H1 (cell line): ENCODE measurements at regions of chr6 and their contacts with region 1.

Region 1: DNA sequence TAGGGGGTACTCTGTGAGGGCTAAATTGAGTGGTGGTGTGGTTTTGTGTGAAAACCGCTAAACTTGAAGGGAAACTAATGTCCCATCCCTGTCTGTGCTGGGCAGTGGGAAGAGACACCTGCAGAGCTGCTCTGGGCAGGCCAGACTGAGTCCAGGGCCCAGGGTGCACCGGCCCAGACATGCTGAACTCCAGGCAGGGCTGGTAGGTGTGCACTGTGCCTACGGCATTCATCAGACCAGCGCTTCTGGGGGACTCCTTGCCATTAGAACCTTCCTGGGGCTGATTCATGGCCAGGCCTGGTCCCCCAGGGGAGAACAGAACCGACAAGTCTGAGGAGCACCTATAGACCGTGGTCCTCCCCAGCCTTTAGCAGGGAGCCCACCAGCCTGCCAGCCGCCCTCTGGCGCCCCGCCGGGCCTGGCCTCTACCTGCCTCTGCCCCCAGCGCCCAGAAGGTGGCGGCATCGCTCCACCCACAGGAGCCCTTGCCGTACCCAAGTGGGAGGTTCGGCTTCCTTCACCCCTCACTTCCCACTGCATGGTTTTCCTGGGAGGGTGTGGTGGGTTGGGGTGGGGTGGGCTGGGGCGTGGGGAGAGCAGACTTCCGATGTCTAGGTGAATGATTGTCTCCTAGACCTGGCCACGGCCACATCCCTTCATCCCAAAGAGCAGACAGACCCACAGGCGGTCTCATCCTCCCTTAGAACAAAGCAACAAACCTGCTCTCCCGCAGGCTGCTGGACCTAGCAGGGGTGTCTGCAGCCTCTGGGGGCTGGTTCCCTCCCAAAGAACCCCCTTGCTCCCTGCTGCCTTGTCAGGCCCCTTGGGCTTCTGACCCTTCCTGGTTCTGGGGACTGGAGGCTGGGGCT is 15.5 kb downstream of the CCDC167 start:
- DNase-seq: peak; percentile 23 to 93
- H3K4me3 ChIP-seq: no peak overlapping the region
- H3K27ac ChIP-seq: no peak overlapping the region
- H3K4me1 ChIP-seq: peaks cover 0 to 15% (median 4%) of the 10 kb centered on the region in 4 experiments; a peak in 5 of 7 replicates
- H3K27me3 ChIP-seq: no peaks in the 10 kb centered on the region
- CTCF ChIP-seq: peak in 2 of 3 experiments; percentile 91 to 97; a peak in 3 of 4 replicates
- EP300 ChIP-seq: no peak
- POLR2A ChIP-seq: no peak
- RAD21 ChIP-seq: peak; percentile 97 to 98

Region 2: DNA sequence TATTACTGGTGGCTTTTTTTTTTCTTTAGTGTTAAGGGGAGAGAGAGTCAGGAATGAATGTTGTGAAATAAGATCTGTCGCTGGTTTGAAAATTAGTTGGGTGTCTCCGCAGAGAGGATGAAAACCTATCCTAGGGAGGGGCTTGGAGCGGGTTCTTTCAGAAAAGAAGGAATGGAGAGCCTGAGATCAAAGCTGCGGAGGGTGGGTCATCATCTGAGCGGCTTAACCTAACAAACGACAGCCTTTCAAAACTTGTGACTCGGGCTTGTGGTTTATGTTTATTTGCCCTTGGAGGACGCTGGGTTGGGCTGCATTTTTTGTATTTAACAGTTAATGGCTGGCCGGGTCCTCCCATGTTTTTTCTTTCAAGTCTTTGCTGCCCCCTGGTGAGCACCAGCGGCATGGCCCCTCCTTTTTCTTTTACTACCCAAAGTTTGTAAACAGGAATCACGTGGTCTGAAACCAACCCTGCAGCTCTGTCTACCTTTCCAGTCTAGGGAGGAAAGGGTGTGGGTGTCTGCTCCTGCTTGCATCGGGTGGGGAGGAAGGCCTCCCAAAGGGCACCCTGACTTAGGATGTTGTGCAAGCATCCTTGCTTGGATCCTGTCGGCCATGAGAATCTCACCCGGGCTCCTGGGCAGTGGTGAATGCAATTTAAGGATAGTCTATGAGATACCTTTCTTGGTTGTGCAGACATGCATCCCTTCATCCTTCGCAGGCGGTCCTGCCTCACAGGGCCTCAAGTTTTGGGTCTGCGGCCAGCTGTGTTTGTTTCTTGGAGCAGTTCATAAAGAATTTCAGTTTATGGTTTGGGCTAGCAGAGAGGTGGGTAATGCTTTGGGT is 312.0 kb before region 1 on chr6:
- CTCF ChIA-PET with region 1: no interaction called
- POLR2A ChIA-PET with region 1: no interaction called
- DNase-seq: peak; percentile 78 to 92
- H3K4me3 ChIP-seq: peak overlapping the region; percentile 92 to 99 (median 94)
- H3K27ac ChIP-seq: no peak overlapping the region
- H3K4me1 ChIP-seq: peaks cover 6 to 14% (median 10%) of the 10 kb centered on the region in 4 experiments; a peak in 5 of 7 replicates
- H3K27me3 ChIP-seq: no peaks in the 10 kb centered on the region
- CTCF ChIP-seq: peak; percentile 49 to 75 (median 68)
- EP300 ChIP-seq: peak in 1 of 2 experiments; percentile 6; a peak in 1 of 3 replicates
- POLR2A ChIP-seq: peak in 1 of 2 experiments; percentile 61; a peak in 1 of 3 replicates
- RAD21 ChIP-seq: peak; percentile 84 to 85

Region 3: GRCh38 chr6:37432916-37433656 is 51.1 kb before region 1 on chr6 and contains the start of gene CMTR1:
- CTCF ChIA-PET with region 1: interaction called, 10 read pairs
- POLR2A ChIA-PET with region 1: interaction called, 5 read pairs
- DNase-seq: peak; percentile 59 to 97
- H3K4me3 ChIP-seq: peak within 1 kb of the TSS; percentile 80 to 92 (median 86)
- H3K27ac ChIP-seq: peak within 1 kb of the TSS; percentile 80; the same call in 1 of the 2 replicates
- H3K4me1 ChIP-seq: peaks cover 0 to 12% (median 3%) of the 10 kb centered on the region in 4 experiments; a peak in 4 of 7 replicates
- H3K27me3 ChIP-seq: no peaks in the 10 kb centered on the region
- CTCF ChIP-seq: no peak
- EP300 ChIP-seq: no peak; a peak in 1 of 3 replicates
- POLR2A ChIP-seq: peak; percentile 60 to 92
- RAD21 ChIP-seq: 0 out of 4 replicates have a peak, but pooled peaks of 1 of the 2 experiments have one; percentile 0
- total RNA-seq, gene CMTR1: 33.1 and 34.3 TPM in 2 replicates

Region 4: DNA sequence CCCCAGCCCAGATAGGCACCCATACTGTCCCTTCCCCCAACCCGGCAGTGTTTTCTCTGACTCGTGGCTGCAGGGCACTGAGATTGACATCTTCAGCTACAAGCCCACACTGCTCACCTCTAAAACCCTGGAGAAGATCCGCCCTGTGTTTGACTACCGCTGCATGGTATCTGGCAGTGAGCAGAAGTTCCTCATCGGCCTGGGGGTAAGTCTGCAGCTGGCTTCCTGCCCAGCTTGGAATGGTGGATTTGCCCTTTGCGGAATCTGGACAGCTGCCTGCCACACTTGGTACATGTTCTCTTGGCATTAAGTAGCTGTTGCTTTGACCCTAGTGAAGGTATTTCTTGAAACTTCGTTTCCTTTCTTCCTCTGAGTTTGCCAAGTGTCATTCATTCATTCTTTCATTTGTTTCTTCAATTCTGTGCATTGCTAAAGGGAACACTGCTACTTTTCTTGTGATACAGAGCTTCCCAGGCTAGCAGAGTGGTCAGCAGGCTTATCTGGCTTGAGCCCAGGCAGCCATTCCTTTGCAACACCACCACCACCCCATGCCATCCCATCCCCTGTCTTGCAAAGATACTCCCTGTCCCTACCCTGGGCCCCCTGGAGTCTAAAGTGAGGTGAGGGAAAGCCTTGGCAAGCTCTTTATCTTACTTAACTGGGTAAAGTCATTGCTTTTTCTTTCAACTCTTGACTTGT is 10.6 kb before region 1 on chr6:
- CTCF ChIA-PET with region 1: interaction called, 11 read pairs
- POLR2A ChIA-PET with region 1: interaction called, 3 read pairs
- DNase-seq: no peak
- H3K4me3 ChIP-seq: no peak overlapping the region
- H3K27ac ChIP-seq: no peak overlapping the region
- H3K4me1 ChIP-seq: no peaks in the 10 kb centered on the region
- H3K27me3 ChIP-seq: no peaks in the 10 kb centered on the region
- CTCF ChIP-seq: no peak
- EP300 ChIP-seq: no peak
- POLR2A ChIP-seq: no peak
- RAD21 ChIP-seq: no peak

Region 5: DNA sequence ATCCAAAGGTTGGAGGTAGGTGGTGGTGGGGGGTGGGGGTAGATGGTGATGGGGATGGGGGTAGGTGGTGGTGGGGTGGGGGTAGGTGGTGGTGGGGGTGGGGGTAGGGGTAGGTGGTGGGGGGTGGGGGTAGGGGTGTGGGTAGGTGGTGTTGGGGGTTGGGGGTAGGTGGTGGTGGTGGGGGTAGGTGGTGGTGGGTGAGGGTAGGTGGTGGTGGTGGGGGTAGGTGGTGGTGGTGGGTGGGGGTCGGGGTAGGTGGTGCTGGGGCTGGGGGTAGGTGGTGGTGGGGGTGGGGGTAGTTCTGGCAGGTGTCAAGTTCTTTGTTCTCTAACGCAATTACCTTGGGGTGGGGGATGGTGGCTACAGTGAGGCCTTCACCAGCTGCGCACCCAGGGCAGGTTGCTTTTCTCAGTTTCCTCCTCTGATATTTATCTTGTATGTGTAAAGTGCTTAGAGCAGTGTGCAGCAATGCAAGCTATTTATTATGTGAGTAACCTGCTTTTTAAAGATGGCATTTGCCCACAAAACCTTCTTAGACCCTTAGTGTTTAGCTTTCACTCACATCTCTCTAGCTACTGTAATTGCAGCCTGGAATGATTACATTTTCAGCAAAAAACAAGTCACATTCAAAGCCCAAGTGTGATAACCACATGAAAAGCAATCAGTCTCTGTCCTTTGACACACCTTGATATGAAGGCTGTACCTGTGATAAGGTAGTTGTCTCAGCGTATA is 23.7 kb after region 1 on chr6:
- CTCF ChIA-PET with region 1: interaction called, 12 read pairs
- POLR2A ChIA-PET with region 1: interaction called, 3 read pairs
- DNase-seq: no peak
- H3K4me3 ChIP-seq: no peak overlapping the region
- H3K27ac ChIP-seq: no peak overlapping the region
- H3K4me1 ChIP-seq: peaks cover 3 to 22% (median 19%) of the 10 kb centered on the region in 4 experiments; a peak in 6 of 7 replicates
- H3K27me3 ChIP-seq: peaks cover 0 to 21% (median 16%) of the 10 kb centered on the region in 4 experiments; a peak in 6 of 7 replicates
- CTCF ChIP-seq: no peak
- EP300 ChIP-seq: no peak
- POLR2A ChIP-seq: no peak
- RAD21 ChIP-seq: no peak

Region 6: DNA sequence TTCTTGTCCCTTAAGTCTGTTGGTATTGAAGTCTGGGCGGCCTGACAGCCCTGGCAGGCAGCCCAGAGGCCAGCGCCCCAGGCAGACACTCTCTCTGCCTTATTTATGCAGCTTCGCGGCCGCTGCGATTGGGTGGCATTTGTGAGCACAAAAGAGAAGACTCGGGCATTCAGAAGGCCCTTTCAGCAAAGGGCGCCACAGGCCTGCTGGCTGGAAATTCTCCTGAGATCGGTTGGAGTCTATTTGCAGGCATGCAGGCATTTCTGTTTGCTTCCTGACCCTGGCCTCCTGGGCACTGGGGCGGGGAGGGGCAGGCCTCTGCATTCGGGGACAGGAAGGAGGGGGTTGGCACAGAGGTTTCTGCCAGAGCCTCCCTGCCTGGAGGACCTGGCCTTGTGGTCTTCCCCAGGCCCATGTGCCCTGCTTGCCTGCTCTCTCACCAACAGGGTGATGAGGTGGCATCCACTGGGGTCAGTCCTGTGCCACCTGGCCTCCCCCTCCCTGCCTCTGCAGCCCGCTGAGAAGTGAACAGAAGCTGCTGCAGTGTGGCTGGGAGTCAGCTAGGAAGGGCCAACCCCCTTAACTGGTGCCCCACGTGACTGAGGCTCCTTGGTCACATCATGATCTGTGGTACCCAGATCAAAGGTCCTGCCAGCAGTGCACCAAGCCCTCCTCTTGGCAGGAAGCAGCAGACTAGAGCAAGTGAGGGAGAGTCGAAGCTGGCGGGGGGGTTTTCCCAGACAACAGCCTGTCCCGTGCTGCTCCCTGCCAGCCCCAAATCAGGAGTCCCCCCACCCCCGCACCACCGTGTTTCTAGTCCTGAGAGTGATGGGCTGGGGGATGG is 32.1 kb after region 1 on chr6:
- CTCF ChIA-PET with region 1: interaction called, 12 read pairs
- POLR2A ChIA-PET with region 1: interaction called, 3 read pairs
- DNase-seq: no peak
- H3K4me3 ChIP-seq: no peak overlapping the region
- H3K27ac ChIP-seq: no peak overlapping the region
- H3K4me1 ChIP-seq: peaks cover 2 to 47% (median 39%) of the 10 kb centered on the region in 4 experiments
- H3K27me3 ChIP-seq: peaks cover 0 to 24% (median 16%) of the 10 kb centered on the region in 4 experiments; a peak in 6 of 7 replicates
- CTCF ChIP-seq: no peak
- EP300 ChIP-seq: no peak
- POLR2A ChIP-seq: no peak
- RAD21 ChIP-seq: no peak; a peak in 1 of 4 replicates

Region 7: GRCh38 chr6:37576336-37576813 is 92.2 kb after region 1 on chr6:
- CTCF ChIA-PET with region 1: interaction called, 13 read pairs
- POLR2A ChIA-PET with region 1: no interaction called
- DNase-seq: no peak
- H3K4me3 ChIP-seq: no peak overlapping the region
- H3K27ac ChIP-seq: no peak overlapping the region
- H3K4me1 ChIP-seq: no peaks in the 10 kb centered on the region
- H3K27me3 ChIP-seq: no peaks in the 10 kb centered on the region; a peak in 1 of 7 replicates
- CTCF ChIP-seq: no peak
- EP300 ChIP-seq: no peak
- POLR2A ChIP-seq: no peak
- RAD21 ChIP-seq: no peak